Activated CD4-positive, alpha-beta memory T cell treated with anti-CD3 and anti-CD28 coated beads for 36 hours (primary cell): ENCODE measurements at regions of chr11 and their contacts with region 1.

Region 1: DNA sequence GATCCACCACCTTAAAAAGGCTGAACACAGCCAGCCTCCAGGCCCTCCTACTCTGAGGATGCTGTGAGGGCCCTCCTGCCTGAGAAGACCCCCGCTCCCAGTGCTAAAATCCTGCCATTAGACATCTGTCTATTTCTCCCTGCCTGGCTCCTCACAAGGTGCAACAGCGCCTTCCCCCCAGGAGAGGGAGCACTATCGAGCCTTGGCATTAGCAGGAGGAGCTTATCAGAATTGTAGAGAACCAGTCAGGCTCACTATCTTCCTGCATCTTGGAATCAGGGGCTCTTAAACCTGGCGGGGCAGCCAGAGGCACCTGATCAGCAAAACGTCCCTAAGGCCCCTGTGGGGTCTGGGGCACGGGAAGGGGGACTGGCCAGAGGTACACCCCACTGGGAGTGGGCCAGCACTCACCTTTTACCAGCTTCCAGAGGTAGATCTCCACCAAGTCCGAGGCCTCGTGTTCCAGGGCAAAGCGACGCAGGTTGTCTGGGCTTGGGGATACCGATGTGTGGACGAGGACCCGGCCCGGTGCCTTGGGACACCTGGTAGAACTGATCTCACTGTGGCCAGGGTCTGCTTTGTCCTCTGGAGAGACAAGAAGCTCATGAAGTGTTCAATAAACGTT is 28.7 kb downstream of the CHRDL2 start:
- DNase-seq: peak; percentile 74
- H3K4me3 Mint-ChIP-seq: no peak overlapping the region
- H3K27ac Mint-ChIP-seq: no peak overlapping the region
- H3K4me1 Mint-ChIP-seq: no peaks in the 10 kb centered on the region
- H3K27me3 Mint-ChIP-seq: peaks cover 2% of the 10 kb centered on the region

Region 2: DNA sequence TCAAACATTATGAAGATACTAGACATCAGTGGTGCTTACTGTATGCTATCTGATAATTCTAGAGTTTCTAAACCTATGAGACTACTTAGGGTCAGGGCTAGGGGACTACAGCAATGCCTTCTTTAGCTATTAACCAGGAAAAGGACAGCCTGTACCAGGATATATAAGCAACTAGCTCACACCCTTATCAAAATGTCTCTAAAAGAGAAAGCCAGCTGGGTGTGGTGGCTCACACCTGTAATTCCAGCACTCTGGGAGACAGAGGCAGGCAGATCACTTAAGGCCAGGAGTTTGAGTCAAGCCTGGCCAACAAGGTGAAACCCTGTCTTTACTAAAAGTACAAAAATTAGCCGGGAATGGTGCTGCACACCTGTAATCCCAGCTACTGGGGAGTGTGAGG is 997.4 kb before region 1 on chr11:
- CTCF ChIA-PET with region 1: no interaction called
- POLR2A ChIA-PET with region 1: no interaction called
- intact Hi-C with region 1: no loop called
- DNase-seq: no peak
- H3K4me3 Mint-ChIP-seq: no peak overlapping the region
- H3K27ac Mint-ChIP-seq: no peak overlapping the region
- H3K4me1 Mint-ChIP-seq: no peaks in the 10 kb centered on the region
- H3K27me3 Mint-ChIP-seq: no peaks in the 10 kb centered on the region

Region 3: GRCh38 chr11:74581954-74582547 is 120.4 kb before region 1 on chr11:
- CTCF ChIA-PET with region 1: no interaction called
- POLR2A ChIA-PET with region 1: no interaction called
- intact Hi-C with region 1: no loop called
- DNase-seq: no peak
- H3K4me3 Mint-ChIP-seq: no peak overlapping the region
- H3K27ac Mint-ChIP-seq: no peak overlapping the region
- H3K4me1 Mint-ChIP-seq: no peaks in the 10 kb centered on the region
- H3K27me3 Mint-ChIP-seq: no peaks in the 10 kb centered on the region

Region 4: GRCh38 chr11:74678591-74679512 is 23.6 kb before region 1 on chr11:
- CTCF ChIA-PET with region 1: interaction called, 10 read pairs
- POLR2A ChIA-PET with region 1: no interaction called
- intact Hi-C with region 1: no loop called
- DNase-seq: no peak
- H3K4me3 Mint-ChIP-seq: no peak overlapping the region
- H3K27ac Mint-ChIP-seq: no peak overlapping the region
- H3K4me1 Mint-ChIP-seq: no peaks in the 10 kb centered on the region
- H3K27me3 Mint-ChIP-seq: peaks cover 12% of the 10 kb centered on the region

Region 5: GRCh38 chr11:74687237-74688023 is 15.1 kb before region 1 on chr11:
- CTCF ChIA-PET with region 1: interaction called, 18 read pairs
- POLR2A ChIA-PET with region 1: no interaction called
- intact Hi-C with region 1: no loop called
- DNase-seq: no peak
- H3K4me3 Mint-ChIP-seq: no peak overlapping the region
- H3K27ac Mint-ChIP-seq: no peak overlapping the region
- H3K4me1 Mint-ChIP-seq: no peaks in the 10 kb centered on the region
- H3K27me3 Mint-ChIP-seq: peaks cover 11% of the 10 kb centered on the region

Region 6: GRCh38 chr11:74726547-74727182 is 24.2 kb after region 1 on chr11:
- CTCF ChIA-PET with region 1: interaction called, 137 read pairs
- POLR2A ChIA-PET with region 1: no interaction called
- intact Hi-C with region 1: loop called (anchors 1 kb)
- DNase-seq: peak; percentile 73
- H3K4me3 Mint-ChIP-seq: no peak overlapping the region
- H3K27ac Mint-ChIP-seq: no peak overlapping the region
- H3K4me1 Mint-ChIP-seq: peaks cover 6% of the 10 kb centered on the region
- H3K27me3 Mint-ChIP-seq: peaks cover 23% of the 10 kb centered on the region

Region 7: DNA sequence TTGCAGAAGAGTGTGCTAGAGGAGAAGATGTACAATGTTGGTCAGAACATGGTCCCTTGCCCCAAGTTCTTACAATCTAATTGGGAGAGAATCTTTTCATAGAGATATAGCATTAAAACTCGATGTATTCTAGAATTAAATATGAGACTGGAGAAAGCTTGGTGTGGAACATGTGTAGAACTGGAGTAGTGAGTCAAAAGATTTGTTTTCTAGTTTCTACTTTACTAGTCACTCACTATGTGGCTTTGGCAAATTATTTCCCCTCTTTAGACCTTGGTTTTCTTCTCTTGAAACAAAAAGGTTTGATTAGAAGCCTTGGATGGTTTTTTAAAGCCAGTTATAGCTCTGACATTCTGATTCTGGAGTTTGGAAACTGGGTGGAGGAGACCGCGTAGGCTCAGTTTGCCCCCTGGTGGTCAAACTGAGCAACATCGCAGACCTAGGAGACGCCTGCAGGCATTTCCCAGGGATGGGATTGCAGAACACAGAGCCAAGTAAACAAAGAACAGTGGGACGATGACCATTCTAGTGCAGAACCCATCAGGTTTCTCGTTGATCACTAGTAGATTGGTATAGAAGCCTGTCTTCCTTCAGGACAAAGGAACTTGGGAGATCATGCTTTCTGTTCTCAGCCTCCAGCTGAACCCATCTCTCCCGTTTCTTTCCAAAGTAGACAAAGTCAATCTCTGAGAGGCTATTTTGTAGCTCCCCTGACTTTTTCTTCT is 37.2 kb after region 1 on chr11:
- CTCF ChIA-PET with region 1: interaction called, 69 read pairs
- POLR2A ChIA-PET with region 1: no interaction called
- intact Hi-C with region 1: loop called (anchors 1 kb)
- DNase-seq: peak; percentile 57
- H3K4me3 Mint-ChIP-seq: no peak overlapping the region
- H3K27ac Mint-ChIP-seq: no peak overlapping the region
- H3K4me1 Mint-ChIP-seq: peaks cover 12% of the 10 kb centered on the region
- H3K27me3 Mint-ChIP-seq: peaks cover 15% of the 10 kb centered on the region

Region 8: DNA sequence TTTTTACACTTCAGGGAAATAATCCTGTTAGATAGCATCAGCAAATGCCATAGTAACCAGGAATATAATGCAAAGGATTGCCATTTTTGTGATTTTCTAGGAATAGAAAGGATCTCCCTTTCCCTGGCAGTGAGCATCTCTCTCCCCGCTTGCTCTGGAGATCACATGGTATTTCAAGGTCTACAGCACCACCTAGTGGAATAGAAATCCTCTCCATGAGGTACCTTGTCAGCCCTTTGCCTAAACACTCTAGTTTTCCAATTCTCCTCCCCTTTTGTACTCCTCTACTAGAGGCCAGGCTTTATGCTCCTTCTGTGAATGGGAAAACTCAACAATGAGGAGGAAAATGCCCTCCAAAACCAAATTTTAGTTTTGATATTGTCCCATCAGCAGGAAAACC is 168.0 kb after region 1 on chr11:
- CTCF ChIA-PET with region 1: interaction called, 24 read pairs
- POLR2A ChIA-PET with region 1: no interaction called
- intact Hi-C with region 1: loop called (anchors 10 kb)
- DNase-seq: no peak
- H3K4me3 Mint-ChIP-seq: no peak overlapping the region
- H3K27ac Mint-ChIP-seq: no peak overlapping the region
- H3K4me1 Mint-ChIP-seq: no peaks in the 10 kb centered on the region
- H3K27me3 Mint-ChIP-seq: no peaks in the 10 kb centered on the region